ENCODE measurements at regions of chr6 and their contacts with region 1.

Region 1: DNA sequence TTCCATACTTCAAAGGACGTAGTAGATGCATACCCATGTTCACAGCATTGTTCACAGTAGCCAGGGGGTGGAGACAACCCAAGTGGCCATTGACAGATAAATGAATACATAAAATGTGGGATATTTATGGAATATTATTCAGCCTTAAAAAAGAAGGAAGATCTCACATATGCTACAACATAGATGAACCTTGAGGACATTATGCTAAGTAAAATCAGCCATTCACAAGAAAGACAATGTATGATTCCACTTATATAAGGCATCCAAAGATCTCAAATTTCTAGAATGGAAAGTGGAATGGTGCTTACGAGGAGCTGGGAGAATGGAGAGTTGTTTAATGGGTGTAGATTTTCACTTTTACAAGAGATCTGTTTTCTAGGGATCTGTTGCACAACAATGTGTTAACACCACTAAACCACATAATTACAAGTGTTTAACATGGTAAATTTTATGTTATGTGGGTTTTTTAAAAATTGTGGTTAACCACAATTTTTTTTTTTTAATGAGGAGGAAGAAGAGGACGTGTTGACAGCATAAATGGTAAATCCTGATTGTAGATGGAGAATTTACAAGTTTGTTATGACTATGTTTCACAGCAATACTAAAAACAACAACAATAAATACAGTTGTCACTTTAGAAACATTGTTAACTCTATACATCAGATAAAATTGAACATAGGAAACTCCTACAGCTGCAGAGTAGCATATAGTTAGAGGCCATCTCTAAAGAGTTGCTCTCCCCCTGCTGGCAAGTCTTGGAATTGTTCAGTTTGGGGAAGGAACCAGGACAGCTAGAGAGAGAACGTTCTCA is 41.6 kb downstream of the CCN2 start:
- DNase-seq: peak; percentile 87
- ATAC-seq: peak; percentile 97
- H3K4me3 Mint-ChIP-seq: no peak overlapping the region
- H3K27ac Mint-ChIP-seq: no peak overlapping the region
- H3K4me1 Mint-ChIP-seq: peaks cover 7% of the 10 kb centered on the region
- H3K27me3 Mint-ChIP-seq: peaks cover 24% of the 10 kb centered on the region
- CTCF ChIP-seq: peak; percentile 89

Region 2: GRCh38 chr6:131688286-131688685 is 221.3 kb before region 1 on chr6:
- CTCF ChIA-PET with region 1: interaction called, 44 read pairs
- POLR2A ChIA-PET with region 1: no interaction called
- intact Hi-C with region 1: loop called (anchors 2 kb)
- DNase-seq: peak; percentile 7
- ATAC-seq: peak; percentile 66
- H3K4me3 Mint-ChIP-seq: no peak overlapping the region
- H3K27ac Mint-ChIP-seq: no peak overlapping the region
- H3K4me1 Mint-ChIP-seq: peaks cover 13% of the 10 kb centered on the region
- H3K27me3 Mint-ChIP-seq: peaks cover 2% of the 10 kb centered on the region
- CTCF ChIP-seq: no peak

Region 3: DNA sequence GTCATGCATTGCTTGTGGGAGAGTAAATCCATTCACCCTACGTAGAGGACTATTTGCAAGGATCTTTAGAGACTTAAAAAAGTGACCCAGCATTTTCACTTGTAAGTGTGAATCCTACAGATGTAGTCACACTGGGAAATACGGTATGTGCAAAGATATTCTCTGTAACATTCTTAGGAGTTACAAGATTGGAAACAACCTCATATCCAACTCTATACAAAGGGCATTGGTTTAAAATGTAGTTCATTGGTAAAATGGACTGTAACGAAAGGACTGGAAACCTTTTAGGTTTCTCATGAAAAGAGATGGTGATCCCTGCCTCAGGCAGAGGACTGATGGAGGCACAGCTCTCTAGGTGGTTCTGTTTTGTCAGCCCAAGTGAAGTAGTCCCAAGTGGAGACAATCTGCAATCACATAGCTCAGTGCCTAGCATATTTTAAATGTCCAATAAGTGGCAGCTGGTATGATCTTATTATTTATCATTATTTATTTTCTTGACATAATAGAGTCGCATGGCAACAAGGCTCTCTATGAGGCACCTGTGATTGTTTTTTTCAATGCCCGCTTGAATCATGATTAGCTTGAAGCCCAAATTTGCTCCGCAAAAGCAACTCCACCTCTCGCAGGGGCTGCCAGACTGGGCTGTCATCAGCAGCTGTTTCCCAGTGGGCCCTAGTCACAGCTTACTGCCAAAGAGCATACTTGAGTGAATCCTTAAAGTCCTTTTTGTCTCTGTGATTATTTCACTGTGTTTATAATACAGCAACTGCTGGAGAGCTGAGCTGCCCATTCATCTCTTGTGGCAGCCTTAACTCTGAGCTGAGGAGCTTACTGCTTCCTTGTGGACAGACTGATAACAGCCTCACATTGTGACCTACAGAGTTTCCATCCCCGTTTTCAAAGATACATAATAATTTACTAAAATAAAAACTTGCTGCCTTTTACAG is 121.6 kb before region 1 on chr6:
- CTCF ChIA-PET with region 1: interaction called, 3 read pairs
- POLR2A ChIA-PET with region 1: no interaction called
- intact Hi-C with region 1: loop called (anchors 10 kb)
- DNase-seq: no peak
- ATAC-seq: no peak
- H3K4me3 Mint-ChIP-seq: no peak overlapping the region
- H3K27ac Mint-ChIP-seq: no peak overlapping the region
- H3K4me1 Mint-ChIP-seq: peaks cover 14% of the 10 kb centered on the region
- H3K27me3 Mint-ChIP-seq: peaks cover 19% of the 10 kb centered on the region
- CTCF ChIP-seq: no peak

Region 4: DNA sequence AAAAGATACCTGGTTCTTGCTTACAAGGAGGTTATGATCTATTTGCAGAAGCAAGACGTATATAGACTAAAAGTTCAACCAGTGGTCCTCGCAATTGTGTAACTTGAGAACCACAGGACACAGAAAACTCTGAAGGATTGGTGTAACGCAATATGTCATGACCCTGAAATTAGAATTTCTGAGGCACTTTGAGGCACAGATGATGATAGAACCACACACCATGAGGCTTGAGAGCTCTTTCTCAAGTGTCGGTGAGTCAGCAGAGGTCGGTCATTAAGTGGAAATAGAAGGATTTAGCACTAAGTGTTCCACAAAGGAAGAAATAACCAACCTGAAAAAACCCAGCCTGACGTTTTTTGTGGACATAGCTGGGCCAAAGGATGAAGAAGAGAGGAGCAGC is 56.8 kb after region 1 on chr6:
- CTCF ChIA-PET with region 1: no interaction called
- POLR2A ChIA-PET with region 1: no interaction called
- intact Hi-C with region 1: no loop called
- DNase-seq: no peak
- ATAC-seq: no peak
- H3K4me3 Mint-ChIP-seq: no peak overlapping the region
- H3K27ac Mint-ChIP-seq: no peak overlapping the region
- H3K4me1 Mint-ChIP-seq: no peaks in the 10 kb centered on the region
- H3K27me3 Mint-ChIP-seq: peaks cover 2% of the 10 kb centered on the region
- CTCF ChIP-seq: no peak